GM10248 (cell line): ENCODE measurements at regions of chr19 and their contacts with region 1.

Region 1: GRCh38 chr19:42596391-42597072 is 1.8 kb upstream of the CEACAM8 start:
- DNase-seq: peak; percentile 57
- CTCF ChIP-seq: peak; percentile 92

Region 2: DNA sequence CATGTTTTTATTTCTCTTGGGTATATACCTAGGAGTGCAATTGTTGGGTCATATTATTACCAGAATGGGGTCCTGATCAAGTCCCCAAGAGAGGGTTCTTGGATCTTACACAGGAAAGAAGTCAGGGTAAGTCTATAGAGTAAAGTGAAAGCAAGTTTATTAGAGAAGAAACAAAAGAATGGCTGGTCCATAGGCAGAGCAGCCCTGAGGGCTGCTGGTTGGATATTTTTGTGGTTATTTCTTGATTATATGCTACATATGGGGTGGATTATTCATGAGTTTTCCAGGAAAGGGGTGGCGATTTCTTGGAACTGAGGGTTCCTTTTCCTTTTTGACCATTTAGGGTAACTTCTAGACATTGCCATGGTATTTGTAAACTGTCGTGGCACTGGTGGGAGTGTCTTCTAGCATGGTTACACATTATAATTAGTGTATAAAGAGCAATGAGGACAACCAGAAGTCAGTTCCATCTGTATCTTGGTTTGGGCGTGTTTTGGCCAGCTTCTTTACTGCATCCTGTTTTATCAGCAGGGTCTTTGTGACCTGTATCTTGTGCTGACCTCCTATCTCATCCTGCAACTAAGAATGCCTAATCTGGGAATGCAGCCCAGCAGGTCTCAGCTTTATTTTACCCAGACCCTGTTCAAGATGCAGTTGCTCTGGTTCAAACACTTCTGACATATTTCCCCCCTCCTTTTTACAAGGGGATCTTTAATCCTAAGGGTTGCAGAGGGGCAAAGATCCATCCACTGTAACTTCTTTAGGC is 109.3 kb before region 1 on chr19:
- CTCF ChIA-PET with region 1: no interaction called
- POLR2A ChIA-PET with region 1: no interaction called
- DNase-seq: no peak
- CTCF ChIP-seq: no peak

Region 3: GRCh38 chr19:42524250-42524649 is 72.3 kb before region 1 on chr19:
- CTCF ChIA-PET with region 1: no interaction called
- POLR2A ChIA-PET with region 1: no interaction called
- DNase-seq: no peak
- CTCF ChIP-seq: no peak

Region 4: GRCh38 chr19:42563352-42564210 is 33.0 kb before region 1 on chr19:
- CTCF ChIA-PET with region 1: interaction called, 21 read pairs
- POLR2A ChIA-PET with region 1: no interaction called
- DNase-seq: peak; percentile 68
- CTCF ChIP-seq: peak; percentile 67

Region 5: DNA sequence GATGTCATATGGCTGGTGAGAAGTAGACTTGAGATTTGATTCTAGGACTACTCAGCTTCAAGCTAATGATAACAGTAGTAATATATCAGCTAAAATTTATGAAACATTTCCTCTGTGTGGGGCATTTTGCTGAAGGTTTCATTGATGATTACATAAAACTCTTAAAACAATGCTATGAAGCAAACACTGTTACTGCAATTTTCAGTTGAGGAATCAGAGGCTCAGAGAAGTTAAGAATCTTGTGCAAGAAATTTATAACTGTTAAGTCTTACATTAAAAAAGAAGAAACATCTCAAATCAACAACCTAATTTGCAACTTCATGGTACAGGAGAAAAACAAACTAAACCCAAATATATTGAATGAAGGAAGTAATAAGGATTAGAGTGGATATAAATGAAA is 12.1 kb before region 1 on chr19:
- CTCF ChIA-PET with region 1: interaction called, 13 read pairs
- POLR2A ChIA-PET with region 1: no interaction called
- DNase-seq: no peak
- CTCF ChIP-seq: no peak

Region 6: DNA sequence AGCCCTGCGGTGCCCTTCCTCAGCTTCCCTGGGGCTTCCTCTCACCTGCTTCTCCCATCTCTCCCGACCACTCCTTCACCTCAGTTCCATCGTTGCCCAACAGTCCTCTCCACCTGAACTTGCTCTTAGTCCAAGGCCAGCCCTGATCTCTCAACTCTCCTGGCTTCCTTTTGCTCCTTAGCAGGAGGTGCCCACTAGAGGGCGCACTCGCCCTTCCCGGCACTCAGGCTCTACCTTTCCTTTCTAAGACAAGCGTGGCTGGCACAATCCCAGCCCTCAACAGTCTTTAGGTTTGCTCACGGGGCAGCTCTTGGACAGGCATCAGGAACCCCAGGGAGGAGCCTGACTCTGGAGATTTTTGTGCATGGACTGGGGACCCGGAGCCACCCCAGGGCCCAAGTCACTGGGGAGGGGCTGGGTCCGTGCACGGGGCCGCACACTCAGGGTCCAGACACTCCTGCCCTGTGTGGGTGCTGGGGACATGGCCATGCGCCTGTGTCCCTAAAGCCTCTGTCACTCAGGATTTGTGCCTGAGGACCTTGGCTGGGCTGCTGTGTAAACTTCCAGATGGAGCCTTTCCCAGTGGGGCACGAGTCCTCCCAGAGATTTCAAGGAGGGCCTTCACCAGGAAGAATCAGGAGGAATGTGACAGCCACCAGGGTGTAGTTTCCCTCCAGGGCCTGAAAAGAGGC is 10.3 kb after region 1 on chr19:
- CTCF ChIA-PET with region 1: interaction called, 21 read pairs
- POLR2A ChIA-PET with region 1: no interaction called
- DNase-seq: peak; percentile 77
- CTCF ChIP-seq: peak; percentile 79

Region 7: GRCh38 chr19:42628411-42629140 is 32.0 kb after region 1 on chr19:
- CTCF ChIA-PET with region 1: interaction called, 13 read pairs
- POLR2A ChIA-PET with region 1: no interaction called
- DNase-seq: no peak
- CTCF ChIP-seq: no peak